WTC11 (cell line): ENCODE measurements at regions of chr4 and their contacts with region 1.

Region 1: DNA sequence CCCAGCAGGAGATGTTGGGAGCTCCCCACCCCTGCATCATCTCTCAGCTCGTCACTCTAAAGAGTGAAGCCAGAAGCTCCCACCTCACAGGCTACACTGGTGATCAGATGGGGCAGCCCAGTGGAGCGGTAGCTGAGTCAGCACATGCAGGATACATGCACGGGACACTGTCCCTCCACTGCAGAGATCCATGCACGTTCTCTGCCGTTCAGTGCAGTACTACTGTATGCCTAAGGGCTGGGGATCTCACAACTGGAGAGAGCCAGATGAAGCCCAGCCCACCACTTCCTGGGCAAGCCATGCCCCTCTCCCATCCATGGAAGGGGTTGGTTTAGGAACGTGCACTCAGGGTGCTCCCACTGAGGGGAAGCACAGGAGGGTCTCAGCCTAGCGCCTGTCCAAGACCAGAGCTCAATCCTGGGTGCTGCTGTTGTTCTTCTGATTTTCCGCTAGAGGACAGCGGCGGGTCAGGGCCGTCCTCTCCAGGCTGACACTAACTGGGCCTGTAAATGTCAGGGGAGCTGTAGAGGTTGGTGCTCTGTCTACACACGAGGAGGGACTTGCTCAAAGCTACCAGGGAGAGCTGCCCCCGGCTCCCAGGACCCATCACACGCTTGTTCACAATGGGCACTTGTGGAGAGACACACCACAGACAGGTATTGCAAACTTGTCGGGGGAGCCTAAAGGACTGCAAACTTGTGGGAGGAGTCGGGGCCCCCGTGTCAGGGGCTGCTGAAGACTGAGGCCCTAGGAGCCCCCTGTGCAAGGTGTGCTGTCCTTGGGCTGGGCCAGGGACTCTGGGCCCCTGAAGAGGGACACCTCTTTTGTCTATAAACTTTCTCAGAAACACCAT is 18.2 kb upstream of the ABLIM2 start:
- DNase-seq: peak; percentile 62
- ATAC-seq: peak; percentile 96
- H3K4me3 Mint-ChIP-seq: no peak overlapping the region
- H3K27ac Mint-ChIP-seq: no peak overlapping the region
- H3K4me1 Mint-ChIP-seq: no peaks in the 10 kb centered on the region
- H3K27me3 Mint-ChIP-seq: no peaks in the 10 kb centered on the region
- CTCF ChIP-seq: peak; percentile 51; the same call in 1 of the 2 replicates

Region 2: DNA sequence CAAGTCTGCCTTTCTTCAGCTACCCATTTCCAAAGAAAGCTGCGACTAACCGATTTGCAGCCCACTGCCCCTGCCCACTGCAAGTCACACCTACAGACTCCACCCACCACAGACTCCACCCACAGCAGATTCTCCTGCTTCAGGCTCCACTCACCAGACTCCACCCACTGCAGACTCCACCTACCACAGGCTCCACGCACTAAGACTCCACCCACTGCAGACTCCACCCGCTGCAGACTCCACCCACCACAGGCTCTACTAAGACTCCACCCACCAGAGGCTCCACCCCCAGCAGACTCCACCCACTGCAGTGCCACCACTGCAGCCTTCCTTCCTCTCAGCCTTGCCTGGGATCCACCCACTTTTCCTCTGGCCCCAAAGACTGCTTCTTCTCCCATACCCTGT is 59.5 kb before region 1 on chr4:
- CTCF ChIA-PET with region 1: interaction called, 21 read pairs
- POLR2A ChIA-PET with region 1: no interaction called
- DNase-seq: peak; percentile 85
- ATAC-seq: peak; percentile 97
- H3K4me3 Mint-ChIP-seq: no peak overlapping the region
- H3K27ac Mint-ChIP-seq: peak overlapping the region; percentile 51; the same call in 1 of the 2 replicates
- H3K4me1 Mint-ChIP-seq: peaks cover 12% of the 10 kb centered on the region
- H3K27me3 Mint-ChIP-seq: peaks cover 3% of the 10 kb centered on the region; the same call in 1 of the 2 replicates
- CTCF ChIP-seq: no peak

Region 3: GRCh38 chr4:8192748-8193738 is 16.3 kb after region 1 on chr4:
- CTCF ChIA-PET with region 1: interaction called, 43 read pairs
- POLR2A ChIA-PET with region 1: no interaction called
- DNase-seq: no peak
- ATAC-seq: peak; percentile 18; the same call in 1 of the 2 replicates
- H3K4me3 Mint-ChIP-seq: no peak overlapping the region
- H3K27ac Mint-ChIP-seq: no peak overlapping the region
- H3K4me1 Mint-ChIP-seq: peaks cover 3% of the 10 kb centered on the region; the same call in 1 of the 2 replicates
- H3K27me3 Mint-ChIP-seq: no peaks in the 10 kb centered on the region
- CTCF ChIP-seq: no peak

Region 4: GRCh38 chr4:8228319-8229250 is 51.8 kb after region 1 on chr4:
- CTCF ChIA-PET with region 1: interaction called, 55 read pairs
- POLR2A ChIA-PET with region 1: no interaction called
- DNase-seq: no peak
- ATAC-seq: no peak
- H3K4me3 Mint-ChIP-seq: no peak overlapping the region
- H3K27ac Mint-ChIP-seq: no peak overlapping the region
- H3K4me1 Mint-ChIP-seq: peaks cover 18% of the 10 kb centered on the region
- H3K27me3 Mint-ChIP-seq: no peaks in the 10 kb centered on the region
- CTCF ChIP-seq: no peak

Region 5: DNA sequence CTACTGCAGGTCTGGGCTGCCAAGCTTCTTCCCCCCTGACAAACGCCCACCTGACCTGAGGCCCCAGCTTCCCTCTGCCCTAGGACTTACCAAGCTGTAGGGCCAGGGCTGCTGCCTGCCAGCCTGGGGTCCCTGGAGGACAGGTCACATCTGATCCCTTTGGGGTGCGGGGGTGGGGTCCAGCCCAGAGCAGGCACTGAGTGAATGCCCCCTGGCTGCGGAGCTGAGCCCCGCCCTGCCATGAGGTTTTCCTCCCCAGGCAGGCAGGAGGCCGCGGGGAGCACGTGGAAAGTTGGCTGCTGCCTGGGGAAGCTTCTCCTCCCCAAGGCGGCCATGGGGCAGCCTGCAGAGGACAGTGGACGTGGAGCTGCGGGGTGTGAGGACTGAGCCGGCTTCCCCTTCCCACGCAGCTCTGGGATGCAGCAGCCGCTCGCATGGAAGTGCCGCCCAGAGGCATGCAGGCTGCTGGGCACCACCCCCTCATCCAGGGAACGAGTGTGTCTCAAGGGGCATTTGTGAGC is 129.8 kb after region 1 on chr4:
- CTCF ChIA-PET with region 1: interaction called, 10 read pairs
- POLR2A ChIA-PET with region 1: no interaction called
- DNase-seq: peak; percentile 19
- ATAC-seq: peak; percentile 64
- H3K4me3 Mint-ChIP-seq: no peak overlapping the region
- H3K27ac Mint-ChIP-seq: no peak overlapping the region
- H3K4me1 Mint-ChIP-seq: 0 out of 2 replicates have a peak, but pooled peaks cover 3% of the 10 kb centered on the region
- H3K27me3 Mint-ChIP-seq: peaks cover 5% of the 10 kb centered on the region
- CTCF ChIP-seq: no peak